ENCODE measurements at regions of chr16 and their contacts with region 1.

Region 1: GRCh38 chr16:15704545-15704987 is 54.5 kb downstream of the NDE1 start:
- DNase-seq: peak; percentile 72 to 87 (median 84)
- ATAC-seq: peak; percentile 69 to 78
- H3K4me3 ChIP-seq: no peak overlapping the region
- H3K27ac ChIP-seq: no peak overlapping the region
- H3K4me1 ChIP-seq: no peaks in the 10 kb centered on the region
- H3K27me3 ChIP-seq: no peaks in the 10 kb centered on the region

Region 2: GRCh38 chr16:15427648-15428239 is 276.8 kb before region 1 on chr16:
- intact Hi-C with region 1: loop called in 3 of 4 experiments (anchors 10 kb)
- DNase-seq: peak; percentile 78 to 89 (median 88)
- ATAC-seq: peak; percentile 91
- H3K4me3 ChIP-seq: peak overlapping the region; percentile 38
- H3K27ac ChIP-seq: no peak overlapping the region
- H3K4me1 ChIP-seq: no peaks in the 10 kb centered on the region
- H3K27me3 ChIP-seq: no peaks in the 10 kb centered on the region

Region 3: GRCh38 chr16:15523092-15523541 is 181.4 kb before region 1 on chr16:
- intact Hi-C with region 1: loop called in 1 of 4 experiments (anchors 10 kb)
- DNase-seq: peak in 2 of 3 donors; percentile 21 to 60
- ATAC-seq: peak in 1 of 2 donors; percentile 23
- H3K4me3 ChIP-seq: no peak overlapping the region
- H3K27ac ChIP-seq: no peak overlapping the region
- H3K4me1 ChIP-seq: peaks cover 7% of the 10 kb centered on the region
- H3K27me3 ChIP-seq: no peaks in the 10 kb centered on the region

Region 4: DNA sequence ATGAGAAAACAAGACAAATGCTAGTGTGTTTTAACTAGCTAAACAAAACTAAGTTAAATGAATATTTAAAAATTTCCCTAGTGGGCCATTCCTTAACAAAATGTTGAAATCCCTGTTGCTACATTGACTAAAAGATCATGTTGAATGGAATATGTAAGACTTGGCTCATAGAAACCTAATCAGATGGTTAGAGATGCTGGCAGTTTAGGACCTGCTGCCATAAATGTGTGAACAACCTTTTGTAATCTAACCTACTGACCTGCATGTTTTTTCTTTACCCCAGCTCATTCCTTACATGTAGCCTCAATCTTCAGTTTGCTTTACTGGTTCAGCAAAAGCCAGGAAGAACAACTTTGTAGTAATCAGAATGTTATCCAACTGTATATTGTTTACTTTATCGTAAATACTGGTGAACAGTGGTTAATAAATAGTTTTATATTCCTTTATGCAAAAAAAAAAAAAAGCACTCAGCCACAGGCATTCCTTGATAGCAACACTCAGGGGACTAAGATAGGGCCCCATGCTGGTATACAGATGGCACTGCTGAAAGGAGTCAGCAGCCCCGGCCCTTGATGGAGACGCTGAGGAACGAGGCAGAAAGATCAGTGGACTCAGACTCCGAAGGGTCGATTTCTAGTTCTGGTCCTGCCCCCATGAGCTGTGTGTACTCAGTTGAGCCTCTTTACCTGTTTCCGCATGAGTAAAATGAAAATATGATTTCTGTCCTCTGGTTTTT is 139.8 kb before region 1 on chr16:
- intact Hi-C with region 1: no loop called
- DNase-seq: no peak
- ATAC-seq: no peak
- H3K4me3 ChIP-seq: no peak overlapping the region
- H3K27ac ChIP-seq: no peak overlapping the region
- H3K4me1 ChIP-seq: no peaks in the 10 kb centered on the region
- H3K27me3 ChIP-seq: no peaks in the 10 kb centered on the region

Region 5: GRCh38 chr16:15650019-15650697 is 54.4 kb before region 1 on chr16 and contains the start of gene NDE1:
- intact Hi-C with region 1: loop called in 1 of 4 experiments (anchors 10 kb)
- DNase-seq: peak; percentile 92 to 97 (median 97)
- ATAC-seq: peak; percentile 99 to 100
- H3K4me3 ChIP-seq: peak within 1 kb of the TSS; percentile 93
- H3K27ac ChIP-seq: peak within 1 kb of the TSS; percentile 92
- H3K4me1 ChIP-seq: peaks cover 2% of the 10 kb centered on the region
- H3K27me3 ChIP-seq: no peaks in the 10 kb centered on the region
- total RNA-seq, gene NDE1: 14.9 to 23.9 (median 17.8) TPM

Measured in right cardiac atrium (tissue), 5 donors.